ENCODE measurements at regions of chr22 and their contacts with region 1.

Region 1: GRCh38 chr22:50341977-50342650 is 1.0 kb upstream of the PPP6R2 start:
- DNase-seq: peak; percentile 83 to 95 (median 92)
- ATAC-seq: peak; percentile 84 to 93 (median 88)
- H3K4me3 ChIP-seq: peak overlapping the region; percentile 75 to 82 (median 78)
- H3K27ac ChIP-seq: peak overlapping the region in 3 of 4 donors; percentile 43 to 64 (median 44)
- H3K4me1 ChIP-seq: no peaks in the 10 kb centered on the region
- H3K27me3 ChIP-seq: no peaks in the 10 kb centered on the region
- CTCF ChIP-seq: peak; percentile 83 to 95 (median 91)

Region 2: GRCh38 chr22:50185384-50186087 is 156.6 kb before region 1 on chr22 and contains the start of gene TRABD:
- intact Hi-C with region 1: no loop called
- DNase-seq: peak; percentile 87 to 96 (median 92)
- ATAC-seq: peak; percentile 64 to 83 (median 69)
- H3K4me3 ChIP-seq: peak within 1 kb of the TSS; percentile 60 to 83 (median 72)
- H3K27ac ChIP-seq: peak within 1 kb of the TSS; percentile 37 to 71 (median 57)
- H3K4me1 ChIP-seq: peaks cover 31 to 38% (median 35%) of the 10 kb centered on the region in 3 donors
- H3K27me3 ChIP-seq: no peaks in the 10 kb centered on the region
- CTCF ChIP-seq: no peak
- total RNA-seq, gene TRABD: 25.9 to 64.1 (median 48.6) TPM

Region 3: GRCh38 chr22:50250555-50251476 is 91.3 kb before region 1 on chr22 and contains the start of gene HDAC10:
- intact Hi-C with region 1: loop called in 2 of 3 experiments (anchors 5 kb)
- DNase-seq: peak in 5 of 6 donors; percentile 76 to 92 (median 82)
- ATAC-seq: peak; percentile 81 to 87 (median 86)
- H3K4me3 ChIP-seq: peak within 1 kb of the TSS; percentile 49 to 84 (median 63)
- H3K27ac ChIP-seq: peak within 1 kb of the TSS; percentile 20 to 75 (median 48)
- H3K4me1 ChIP-seq: peaks cover 10 to 17% (median 12%) of the 10 kb centered on the region in 3 donors
- H3K27me3 ChIP-seq: no peaks in the 10 kb centered on the region
- CTCF ChIP-seq: no peak
- total RNA-seq, gene HDAC10: 17.0 to 40.7 (median 19.1) TPM

Region 4: GRCh38 chr22:50260801-50261614 is 81.1 kb before region 1 on chr22:
- intact Hi-C with region 1: loop called in 1 of 3 experiments (anchors 5 kb)
- DNase-seq: peak in 1 of 6 donors; percentile 80
- ATAC-seq: peak in 3 of 4 donors; percentile 28 to 58 (median 42)
- H3K4me3 ChIP-seq: peak overlapping the region; percentile 2 to 43 (median 22)
- H3K27ac ChIP-seq: no peak overlapping the region
- H3K4me1 ChIP-seq: no peaks in the 10 kb centered on the region
- H3K27me3 ChIP-seq: no peaks in the 10 kb centered on the region
- CTCF ChIP-seq: no peak

Region 5: DNA sequence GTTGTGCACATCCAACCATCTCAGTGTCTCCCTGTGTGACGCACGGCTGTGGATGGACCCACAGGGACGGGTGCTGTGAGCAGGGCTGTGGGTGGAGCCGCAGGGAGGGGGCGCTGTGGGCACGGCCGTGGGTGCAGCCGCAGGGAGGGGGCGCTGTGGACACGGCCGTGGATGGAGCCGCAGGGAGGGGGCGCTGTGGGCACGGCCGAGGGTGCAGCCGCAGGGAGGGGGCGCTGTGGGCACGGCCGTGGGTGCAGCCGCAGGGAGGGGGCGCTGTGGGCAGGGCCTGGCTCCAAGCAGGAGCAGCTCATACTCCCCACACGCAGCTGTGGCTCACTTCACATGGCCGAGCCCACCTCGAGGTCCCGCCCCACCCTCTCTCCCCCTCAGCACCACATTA is 66.0 kb before region 1 on chr22:
- intact Hi-C with region 1: loop called in 1 of 3 experiments (anchors 5 kb)
- DNase-seq: peak in 5 of 6 donors; percentile 51 to 77 (median 59)
- ATAC-seq: peak; percentile 39 to 67 (median 64)
- H3K4me3 ChIP-seq: no peak overlapping the region
- H3K27ac ChIP-seq: no peak overlapping the region
- H3K4me1 ChIP-seq: peaks cover 4 to 9% (median 8%) of the 10 kb centered on the region in 3 donors
- H3K27me3 ChIP-seq: no peaks in the 10 kb centered on the region
- CTCF ChIP-seq: peak in 2 of 4 donors; percentile 25 to 27

Measured in pancreas (tissue), 10 donors.